Left lung (tissue), 14 donors: ENCODE measurements at regions of chr17 and their contacts with region 1.

Region 1: GRCh38 chr17:72725433-72726068 is 366.9 kb downstream of the SLC39A11 start:
- DNase-seq: peak in 3 of 4 donors; percentile 45 to 87 (median 47)
- ATAC-seq: peak; percentile 76
- H3K4me3 ChIP-seq: no peak overlapping the region
- H3K27ac ChIP-seq: no peak overlapping the region
- H3K4me1 ChIP-seq: peaks cover 4 to 10% of the 10 kb centered on the region in 2 donors
- H3K27me3 ChIP-seq: no peaks in the 10 kb centered on the region
- CTCF ChIP-seq: peak; percentile 77 to 90

Region 2: DNA sequence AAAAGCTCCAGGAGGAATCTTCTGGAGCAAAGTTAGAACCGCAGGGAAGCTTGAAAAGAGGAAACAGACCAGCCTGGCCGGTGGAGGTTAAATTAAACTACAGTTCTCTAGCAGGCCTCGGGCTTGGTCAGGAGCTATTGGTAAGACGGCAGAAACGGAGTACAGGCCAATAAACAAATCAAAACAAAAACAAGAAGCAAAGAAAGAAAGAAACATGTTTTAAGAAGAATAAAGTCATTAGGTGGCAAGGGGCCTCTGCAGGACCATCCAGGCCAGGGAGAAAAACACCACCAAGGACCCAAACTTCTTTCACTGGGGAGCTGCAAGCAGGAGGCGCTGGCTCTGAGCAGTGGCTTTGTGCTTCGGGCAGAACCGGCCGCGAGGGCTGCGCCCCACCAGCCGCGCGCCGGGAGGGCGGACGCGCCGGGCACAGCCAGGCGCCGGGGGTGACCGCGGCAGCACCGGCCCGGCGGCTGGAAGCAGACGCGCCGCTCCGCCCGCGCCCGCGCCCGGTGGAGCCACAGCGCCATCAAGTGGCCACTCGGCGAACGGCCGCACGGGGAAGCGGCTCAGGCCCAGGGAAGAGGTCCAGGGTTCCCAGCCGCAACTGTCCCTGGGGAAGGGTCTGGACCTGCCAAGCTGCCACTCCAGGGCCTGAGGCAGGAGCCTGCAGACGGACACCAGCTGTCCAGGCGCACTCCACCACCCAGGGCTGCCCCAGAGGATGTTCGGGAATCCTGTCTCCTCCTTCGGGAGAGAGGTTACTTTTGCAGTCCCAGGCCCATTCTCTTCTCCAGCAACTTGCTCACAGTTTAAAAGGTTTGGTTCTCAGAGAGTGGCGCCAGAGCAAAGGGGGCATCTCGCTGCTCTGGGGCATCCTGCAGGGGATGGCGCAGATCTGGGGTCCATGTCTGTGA is 185.3 kb before region 1 on chr17:
- intact Hi-C with region 1: no loop called
- DNase-seq: peak; percentile 49 to 92 (median 78)
- ATAC-seq: peak; percentile 100
- H3K4me3 ChIP-seq: no peak overlapping the region
- H3K27ac ChIP-seq: no peak overlapping the region
- H3K4me1 ChIP-seq: peaks cover 0 to 3% of the 10 kb centered on the region in 2 donors
- H3K27me3 ChIP-seq: peaks cover 0 to 28% of the 10 kb centered on the region in 2 donors
- CTCF ChIP-seq: peak; percentile 82 to 88

Region 3: DNA sequence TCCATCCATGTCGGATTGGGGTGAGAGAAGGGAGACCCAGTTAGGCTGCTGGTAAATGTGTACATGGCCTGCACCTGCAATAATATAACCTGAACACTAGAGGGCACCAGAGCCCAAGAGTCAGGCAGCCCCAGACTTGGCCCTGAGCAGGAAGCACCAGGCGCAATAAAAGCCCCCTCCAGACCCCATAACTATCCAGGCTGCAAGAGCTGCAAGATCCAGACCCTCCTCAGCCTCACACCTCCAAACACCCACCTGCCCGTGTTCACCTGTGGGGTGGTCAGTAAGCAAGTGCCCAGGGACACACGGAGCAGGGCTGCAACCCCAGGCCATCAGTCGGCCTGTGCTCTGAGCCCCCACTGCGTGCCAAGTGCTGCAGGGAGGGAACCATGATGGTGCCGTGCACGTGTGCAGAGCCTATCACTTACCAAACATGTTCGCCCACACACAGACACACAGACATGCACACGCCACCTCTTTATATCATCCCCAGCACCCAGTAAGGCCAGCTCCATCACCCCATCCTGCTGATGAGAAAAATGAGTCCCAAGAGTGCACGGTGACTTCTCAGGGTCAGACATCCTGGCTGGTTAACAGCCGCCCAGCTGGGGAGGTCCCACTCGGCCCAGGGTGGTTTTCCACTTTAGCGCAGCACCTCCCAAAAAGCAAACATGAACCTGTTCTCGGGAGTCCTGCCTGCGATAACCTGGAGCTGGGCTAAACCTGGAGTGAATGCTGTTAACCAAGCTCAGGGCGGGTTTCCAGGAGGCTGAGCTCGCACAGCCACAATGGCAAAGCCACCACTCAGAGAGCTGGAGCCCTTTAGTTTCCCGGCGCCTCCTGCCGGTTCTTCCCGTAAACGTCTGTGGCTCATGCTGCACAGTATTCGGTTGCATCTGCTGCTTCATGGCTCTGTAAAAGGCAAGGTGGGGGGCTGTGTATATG is 165.0 kb before region 1 on chr17:
- intact Hi-C with region 1: loop called in 1 of 2 experiments (anchors 10 kb)
- DNase-seq: peak in 3 of 4 donors; percentile 58 to 83 (median 70)
- ATAC-seq: peak; percentile 90
- H3K4me3 ChIP-seq: no peak overlapping the region
- H3K27ac ChIP-seq: no peak overlapping the region
- H3K4me1 ChIP-seq: peaks cover 0 to 4% of the 10 kb centered on the region in 2 donors
- H3K27me3 ChIP-seq: no peaks in the 10 kb centered on the region
- CTCF ChIP-seq: peak; percentile 73 to 79

Region 4: DNA sequence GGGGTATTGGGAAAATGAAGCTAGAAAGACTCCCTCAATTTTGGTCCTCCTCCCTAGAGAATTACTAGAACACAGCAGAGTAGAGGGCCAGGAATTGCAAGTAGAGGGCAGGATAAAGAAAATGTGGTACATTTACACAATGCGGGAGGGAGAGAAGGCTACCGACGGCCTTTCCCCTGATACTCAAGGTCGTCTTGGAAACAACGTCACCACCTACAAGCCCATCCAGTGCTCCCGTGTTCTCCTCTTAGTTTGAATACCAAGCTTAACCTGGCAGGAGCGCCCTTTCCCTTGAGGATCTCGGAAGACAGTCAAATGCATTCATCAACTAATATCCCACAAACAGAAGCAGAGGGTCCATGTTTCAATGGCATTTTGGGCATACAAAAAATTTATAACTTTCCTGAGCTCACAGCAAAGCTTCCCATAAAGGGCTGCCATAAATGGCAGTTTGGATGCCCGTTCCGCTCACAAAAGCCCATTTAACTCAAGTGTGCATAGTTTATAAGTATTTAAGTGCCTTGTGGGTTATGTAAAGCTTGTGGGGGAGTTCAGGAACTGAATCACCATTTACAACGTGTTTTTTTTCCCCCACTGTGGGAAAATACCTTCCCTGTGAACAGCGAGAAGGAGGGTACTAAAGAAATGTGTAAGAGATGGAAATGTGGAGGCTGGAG is 47.7 kb before region 1 on chr17:
- intact Hi-C with region 1: no loop called
- DNase-seq: no peak
- ATAC-seq: peak; percentile 57
- H3K4me3 ChIP-seq: no peak overlapping the region
- H3K27ac ChIP-seq: no peak overlapping the region
- H3K4me1 ChIP-seq: no peaks in the 10 kb centered on the region
- H3K27me3 ChIP-seq: no peaks in the 10 kb centered on the region
- CTCF ChIP-seq: no peak

Region 5: GRCh38 chr17:73156166-73156840 is 430.8 kb after region 1 on chr17:
- intact Hi-C with region 1: loop called in 1 of 2 experiments (anchors 10 kb)
- DNase-seq: peak; percentile 36 to 93 (median 66)
- ATAC-seq: peak; percentile 99
- H3K4me3 ChIP-seq: no peak overlapping the region
- H3K27ac ChIP-seq: no peak overlapping the region
- H3K4me1 ChIP-seq: peaks cover 0 to 17% of the 10 kb centered on the region in 2 donors
- H3K27me3 ChIP-seq: peaks cover 0 to 22% of the 10 kb centered on the region in 2 donors
- CTCF ChIP-seq: peak; percentile 63 to 82

Region 6: DNA sequence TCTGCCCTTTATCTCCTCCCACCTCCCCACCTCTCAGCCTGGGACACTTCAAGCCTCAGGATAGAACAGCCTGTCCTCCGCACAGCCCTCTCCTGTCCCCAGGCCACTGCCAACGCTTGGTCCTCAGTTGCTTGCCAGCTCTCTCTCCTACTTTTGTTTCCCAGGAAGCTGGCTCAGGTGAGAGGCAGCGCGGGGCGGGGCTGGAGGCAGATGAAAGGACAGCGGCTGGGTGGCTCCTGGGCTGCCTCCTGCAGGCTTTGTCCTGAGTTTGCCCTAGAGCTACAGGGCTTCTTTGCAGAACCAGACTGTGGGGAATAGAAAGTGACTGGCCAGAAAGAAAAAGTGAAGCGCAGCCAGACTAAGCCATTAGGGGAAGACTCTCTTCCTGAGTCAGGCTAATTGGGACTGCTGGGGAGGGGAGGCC is 634.4 kb after region 1 on chr17:
- intact Hi-C with region 1: loop called in 1 of 2 experiments (anchors 10 kb)
- DNase-seq: peak in 3 of 4 donors; percentile 55 to 87 (median 76)
- ATAC-seq: peak; percentile 93
- H3K4me3 ChIP-seq: no peak overlapping the region
- H3K27ac ChIP-seq: no peak overlapping the region
- H3K4me1 ChIP-seq: peaks cover 0 to 4% of the 10 kb centered on the region in 2 donors
- H3K27me3 ChIP-seq: no peaks in the 10 kb centered on the region
- CTCF ChIP-seq: no peak